Natural killer cell (primary cell): ENCODE measurements at regions of chr15 and their contacts with region 1.

Region 1: GRCh38 chr15:92917606-92918407 is 17.7 kb downstream of the CHD2 start:
- DNase-seq: peak; percentile 90 to 96
- ATAC-seq: peak; percentile 56 to 89 (median 73)
- H3K4me3 ChIP-seq: no peak overlapping the region
- H3K4me3 Mint-ChIP-seq: peak overlapping the region; percentile 72
- H3K27ac ChIP-seq: peak overlapping the region; percentile 81
- H3K27ac Mint-ChIP-seq: peak overlapping the region; percentile 98 to 99
- H3K4me1 ChIP-seq: peaks cover 51% of the 10 kb centered on the region
- H3K4me1 Mint-ChIP-seq: peaks cover 81 to 82% of the 10 kb centered on the region in 2 donors
- H3K27me3 ChIP-seq: no peaks in the 10 kb centered on the region
- H3K27me3 Mint-ChIP-seq: no peaks in the 10 kb centered on the region
- CTCF ChIP-seq: peak; percentile 92

Region 2: DNA sequence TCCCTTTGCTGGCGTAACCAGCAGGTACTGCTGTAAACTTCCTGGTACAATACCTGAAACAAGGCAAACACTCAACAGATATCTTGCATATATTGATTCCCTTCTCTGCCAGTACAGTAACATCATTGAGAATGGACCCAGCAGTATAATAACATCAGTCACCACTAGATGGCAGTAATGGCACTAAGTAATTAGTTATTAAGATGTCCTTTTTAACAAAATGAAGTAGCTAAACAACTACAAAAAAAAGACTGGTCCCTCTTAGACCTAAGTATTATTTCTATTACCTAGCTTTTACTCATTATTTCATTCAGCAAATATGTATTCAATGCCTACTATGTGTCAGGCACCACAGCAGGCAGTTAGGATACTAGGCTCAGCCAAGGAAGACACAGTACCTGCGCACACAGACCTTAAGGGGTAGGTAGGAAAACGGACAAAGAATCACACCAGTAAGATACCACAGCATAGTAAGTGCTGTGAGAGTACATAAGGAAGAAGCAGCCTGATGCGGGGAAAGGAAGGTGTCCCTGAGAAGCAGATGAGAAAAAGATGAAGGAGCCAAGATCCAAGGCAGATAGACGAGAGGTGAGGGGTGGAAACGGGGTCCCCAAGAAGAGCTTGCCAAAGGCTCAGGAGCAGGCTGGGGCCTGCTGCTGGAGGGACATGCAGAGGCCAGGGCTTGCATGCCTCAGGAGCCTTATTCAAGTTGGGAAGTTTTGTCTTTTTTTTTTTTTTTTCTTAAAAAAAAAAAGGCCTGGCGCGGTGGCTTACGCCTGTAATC is 120.4 kb before region 1 on chr15:
- intact Hi-C with region 1: loop called (anchors 1 kb)
- DNase-seq: peak in 1 of 2 donors; percentile 91
- ATAC-seq: peak; percentile 88 to 98 (median 92)
- H3K4me3 ChIP-seq: no peak overlapping the region
- H3K4me3 Mint-ChIP-seq: no peak overlapping the region
- H3K27ac ChIP-seq: no peak overlapping the region
- H3K27ac Mint-ChIP-seq: peak overlapping the region; percentile 21 to 77
- H3K4me1 ChIP-seq: no peaks in the 10 kb centered on the region
- H3K4me1 Mint-ChIP-seq: peaks cover 5% of the 10 kb centered on the region in 2 donors
- H3K27me3 ChIP-seq: no peaks in the 10 kb centered on the region
- H3K27me3 Mint-ChIP-seq: no peaks in the 10 kb centered on the region
- CTCF ChIP-seq: peak; percentile 81

Region 3: GRCh38 chr15:92808978-92809879 is 108.6 kb before region 1 on chr15:
- intact Hi-C with region 1: loop called (anchors 1 kb)
- DNase-seq: peak; percentile 96 to 99
- ATAC-seq: peak; percentile 83 to 95 (median 88)
- H3K4me3 ChIP-seq: peak overlapping the region; percentile 60
- H3K4me3 Mint-ChIP-seq: peak overlapping the region; percentile 91
- H3K27ac ChIP-seq: peak overlapping the region; percentile 96
- H3K27ac Mint-ChIP-seq: peak overlapping the region; percentile 95 to 96
- H3K4me1 ChIP-seq: peaks cover 24% of the 10 kb centered on the region
- H3K4me1 Mint-ChIP-seq: peaks cover 26 to 27% of the 10 kb centered on the region in 2 donors
- H3K27me3 ChIP-seq: no peaks in the 10 kb centered on the region
- H3K27me3 Mint-ChIP-seq: no peaks in the 10 kb centered on the region
- CTCF ChIP-seq: peak; percentile 97

Region 4: DNA sequence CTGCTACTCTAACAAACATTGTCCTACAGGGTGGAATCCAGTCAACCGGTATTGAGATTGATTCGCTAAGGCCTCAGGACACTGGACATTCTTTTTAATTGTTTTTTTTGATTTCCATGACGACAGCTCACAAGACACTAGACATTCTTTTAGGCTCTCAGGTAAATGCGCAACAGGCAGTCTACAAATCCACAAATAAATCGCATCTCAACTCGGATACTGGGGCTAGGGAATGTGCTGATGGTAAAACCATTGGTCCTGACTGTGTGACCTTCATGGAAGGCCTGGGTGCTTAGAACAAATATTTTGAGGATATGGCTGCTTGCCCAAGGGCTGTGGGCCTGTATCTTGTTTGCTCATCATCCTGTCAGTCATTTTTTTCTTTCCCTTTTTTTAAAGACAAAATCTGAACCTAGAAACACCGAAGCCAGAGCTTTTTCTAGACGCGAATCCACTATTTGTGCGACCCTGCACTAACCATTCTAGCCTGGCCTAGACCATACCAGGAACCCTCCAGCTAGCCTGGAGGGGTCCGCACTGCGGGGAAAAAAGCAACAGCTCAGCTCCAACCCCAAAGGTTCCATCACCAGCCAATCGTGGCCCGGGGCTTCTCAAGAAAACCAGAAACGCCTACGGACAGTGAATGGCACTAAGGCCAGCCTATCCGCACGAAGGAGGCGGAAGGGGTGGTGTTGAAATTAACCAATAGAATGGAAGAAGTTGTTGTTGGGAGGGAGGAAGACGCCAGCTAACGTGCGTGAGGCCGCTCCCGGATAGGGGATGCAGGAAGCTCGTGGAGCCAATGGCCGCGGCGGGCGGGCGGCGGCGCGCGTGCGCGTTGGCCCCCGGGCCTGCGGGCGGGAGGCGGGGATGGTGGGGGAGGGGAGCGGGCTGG is 35.8 kb before region 1 on chr15:
- intact Hi-C with region 1: loop called (anchors 1 kb)
- DNase-seq: peak; percentile 95 to 99
- ATAC-seq: peak; percentile 89 to 97 (median 91)
- H3K4me3 ChIP-seq: peak overlapping the region; percentile 32
- H3K4me3 Mint-ChIP-seq: peak overlapping the region; percentile 87
- H3K27ac ChIP-seq: peak overlapping the region; percentile 86
- H3K27ac Mint-ChIP-seq: peak overlapping the region; percentile 93 to 98
- H3K4me1 ChIP-seq: peaks cover 19% of the 10 kb centered on the region
- H3K4me1 Mint-ChIP-seq: peaks cover 43 to 52% of the 10 kb centered on the region in 2 donors
- H3K27me3 ChIP-seq: no peaks in the 10 kb centered on the region
- H3K27me3 Mint-ChIP-seq: peaks cover 9 to 16% of the 10 kb centered on the region in 2 donors
- CTCF ChIP-seq: no peak

Region 5: GRCh38 chr15:92903941-92904831 is 13.6 kb before region 1 on chr15:
- intact Hi-C with region 1: loop called (anchors 1 kb)
- DNase-seq: peak; percentile 99
- ATAC-seq: peak; percentile 73 to 95 (median 86)
- H3K4me3 ChIP-seq: peak overlapping the region; percentile 65
- H3K4me3 Mint-ChIP-seq: peak overlapping the region; percentile 93
- H3K27ac ChIP-seq: peak overlapping the region; percentile 99
- H3K27ac Mint-ChIP-seq: peak overlapping the region; percentile 99 to 100
- H3K4me1 ChIP-seq: peaks cover 27% of the 10 kb centered on the region
- H3K4me1 Mint-ChIP-seq: peaks cover 76% of the 10 kb centered on the region in 2 donors
- H3K27me3 ChIP-seq: no peaks in the 10 kb centered on the region
- H3K27me3 Mint-ChIP-seq: no peaks in the 10 kb centered on the region
- CTCF ChIP-seq: no peak

Region 6: DNA sequence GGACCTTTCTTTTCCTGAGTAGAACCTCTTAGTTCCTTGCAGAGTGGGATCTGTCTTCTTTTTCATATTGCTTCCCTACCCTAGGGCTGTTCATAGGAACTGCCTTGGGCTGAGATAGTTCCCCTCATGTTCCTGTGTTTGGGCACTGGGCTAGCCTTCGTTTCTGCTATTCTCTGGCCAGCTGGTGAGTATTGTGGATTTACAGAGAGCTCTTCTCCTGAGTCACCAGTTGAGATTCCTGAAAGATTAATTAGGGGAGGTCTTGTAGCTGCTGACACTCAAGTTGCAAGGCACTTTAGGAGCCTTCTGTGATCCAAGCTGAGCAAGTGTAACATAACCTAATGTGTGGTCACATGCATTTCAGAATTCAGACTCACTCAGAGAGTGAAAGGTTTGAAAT is 13.0 kb after region 1 on chr15:
- intact Hi-C with region 1: no loop called
- DNase-seq: no peak
- ATAC-seq: no peak
- H3K4me3 ChIP-seq: no peak overlapping the region
- H3K4me3 Mint-ChIP-seq: no peak overlapping the region
- H3K27ac ChIP-seq: no peak overlapping the region
- H3K27ac Mint-ChIP-seq: peak overlapping the region; percentile 22 to 64
- H3K4me1 ChIP-seq: no peaks in the 10 kb centered on the region
- H3K4me1 Mint-ChIP-seq: peaks cover 43 to 57% of the 10 kb centered on the region in 2 donors
- H3K27me3 ChIP-seq: no peaks in the 10 kb centered on the region
- H3K27me3 Mint-ChIP-seq: no peaks in the 10 kb centered on the region
- CTCF ChIP-seq: no peak